CD14-positive monocyte (primary cell): ENCODE measurements at regions of chr1 and their contacts with region 1.

Region 1: GRCh38 chr1:3624200-3625136 is at the start of gene TPRG1L:
- DNase-seq: peak; percentile 96 to 97 (median 96)
- H3K4me3 ChIP-seq: peak within 1 kb of the TSS; percentile 67 to 99 (median 69)
- H3K4me3 Mint-ChIP-seq: peak within 1 kb of the TSS; percentile 92 to 94
- H3K27ac ChIP-seq: peak within 1 kb of the TSS in 1 of 2 donors; percentile 74
- H3K27ac Mint-ChIP-seq: peak within 1 kb of the TSS; percentile 31 to 90 (median 82)
- H3K4me1 ChIP-seq: peaks cover 27 to 35% of the 10 kb centered on the region in 2 donors
- H3K4me1 Mint-ChIP-seq: peaks cover 40% of the 10 kb centered on the region
- H3K27me3 ChIP-seq: no peaks in the 10 kb centered on the region
- H3K27me3 Mint-ChIP-seq: peaks cover 0 to 16% (median 1%) of the 10 kb centered on the region in 3 donors
- CTCF ChIP-seq: no peak
- polyA plus RNA-seq, gene TPRG1L: 16.1 to 19.7 (median 18.5) TPM

Region 2: GRCh38 chr1:3482590-3482899 is 141.9 kb before region 1 on chr1:
- intact Hi-C with region 1: no loop called
- DNase-seq: no peak
- H3K4me3 ChIP-seq: no peak overlapping the region
- H3K4me3 Mint-ChIP-seq: no peak overlapping the region
- H3K27ac ChIP-seq: no peak overlapping the region
- H3K27ac Mint-ChIP-seq: no peak overlapping the region
- H3K4me1 ChIP-seq: no peaks in the 10 kb centered on the region
- H3K4me1 Mint-ChIP-seq: no peaks in the 10 kb centered on the region
- H3K27me3 ChIP-seq: no peaks in the 10 kb centered on the region
- H3K27me3 Mint-ChIP-seq: peaks cover 2 to 7% (median 3%) of the 10 kb centered on the region in 3 donors
- CTCF ChIP-seq: no peak

Region 3: GRCh38 chr1:3649342-3650247 is 25.1 kb after region 1 on chr1 and contains the start of gene WRAP73:
- intact Hi-C with region 1: loop called in 1 of 2 experiments (anchors 1 kb)
- DNase-seq: peak; percentile 86 to 93 (median 87)
- H3K4me3 ChIP-seq: peak within 1 kb of the TSS; percentile 71 to 91 (median 75)
- H3K4me3 Mint-ChIP-seq: peak within 1 kb of the TSS; percentile 82 to 90
- H3K27ac ChIP-seq: peak within 1 kb of the TSS in 1 of 2 donors; percentile 66
- H3K27ac Mint-ChIP-seq: peak within 1 kb of the TSS in 2 of 7 donors; percentile 87 to 89
- H3K4me1 ChIP-seq: peaks cover 36 to 48% of the 10 kb centered on the region in 2 donors
- H3K4me1 Mint-ChIP-seq: peaks cover 26% of the 10 kb centered on the region
- H3K27me3 ChIP-seq: peaks cover 34 to 41% of the 10 kb centered on the region in 2 donors
- H3K27me3 Mint-ChIP-seq: peaks cover 35 to 44% (median 39%) of the 10 kb centered on the region in 3 donors
- CTCF ChIP-seq: peak; percentile 16
- polyA plus RNA-seq, gene WRAP73: 26.1 to 64.9 (median 33.2) TPM

Region 4: DNA sequence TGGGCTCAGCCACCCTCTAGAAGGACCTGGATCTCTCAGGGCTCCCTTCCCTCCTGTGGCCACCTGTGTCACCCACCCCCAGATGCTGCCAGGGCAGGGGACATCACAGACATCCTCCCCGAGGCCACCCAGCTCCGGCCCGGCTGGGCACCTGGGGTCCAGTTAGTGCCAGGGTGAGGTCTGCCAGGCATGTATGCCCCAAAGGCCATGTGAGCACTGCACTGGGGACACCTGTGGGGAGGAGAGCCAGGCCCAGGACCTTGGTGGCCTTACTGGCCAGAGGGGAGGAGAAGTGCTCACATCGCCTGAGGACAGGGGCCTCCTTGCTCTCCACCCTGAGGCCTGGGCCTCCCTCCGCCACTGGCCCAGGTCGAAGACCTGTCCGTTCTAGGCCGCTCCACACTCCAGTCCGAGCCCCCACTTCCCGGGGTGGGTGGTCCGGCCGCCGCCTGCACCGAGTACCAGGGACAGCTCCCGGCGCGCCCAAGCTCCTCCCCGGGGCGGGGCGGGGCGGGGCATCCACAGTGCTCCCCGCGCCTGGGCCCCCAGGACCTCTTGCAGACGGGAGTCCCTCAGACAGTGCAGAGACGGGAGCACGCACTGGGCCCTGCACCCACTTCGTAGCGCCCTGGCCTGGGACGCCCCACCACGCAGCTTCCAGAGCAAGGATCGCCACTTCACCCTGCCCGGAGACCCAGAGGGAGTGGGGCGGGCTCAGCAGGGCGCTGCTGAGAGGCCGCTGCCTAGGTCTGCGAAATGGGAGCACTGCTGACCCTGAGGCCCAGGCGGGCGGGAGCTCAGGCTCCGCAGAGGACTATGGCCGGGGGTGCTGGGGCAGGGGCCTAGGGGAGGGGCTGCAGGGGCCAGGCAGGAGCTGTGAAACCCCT is 93.5 kb after region 1 on chr1:
- intact Hi-C with region 1: no loop called
- DNase-seq: no peak
- H3K4me3 ChIP-seq: no peak overlapping the region
- H3K4me3 Mint-ChIP-seq: no peak overlapping the region
- H3K27ac ChIP-seq: no peak overlapping the region
- H3K27ac Mint-ChIP-seq: no peak overlapping the region
- H3K4me1 ChIP-seq: peaks cover 6 to 9% of the 10 kb centered on the region in 2 donors
- H3K4me1 Mint-ChIP-seq: peaks cover 2% of the 10 kb centered on the region
- H3K27me3 ChIP-seq: peaks cover 0 to 3% of the 10 kb centered on the region in 2 donors
- H3K27me3 Mint-ChIP-seq: peaks cover 4 to 15% (median 6%) of the 10 kb centered on the region in 3 donors
- CTCF ChIP-seq: no peak

Region 5: DNA sequence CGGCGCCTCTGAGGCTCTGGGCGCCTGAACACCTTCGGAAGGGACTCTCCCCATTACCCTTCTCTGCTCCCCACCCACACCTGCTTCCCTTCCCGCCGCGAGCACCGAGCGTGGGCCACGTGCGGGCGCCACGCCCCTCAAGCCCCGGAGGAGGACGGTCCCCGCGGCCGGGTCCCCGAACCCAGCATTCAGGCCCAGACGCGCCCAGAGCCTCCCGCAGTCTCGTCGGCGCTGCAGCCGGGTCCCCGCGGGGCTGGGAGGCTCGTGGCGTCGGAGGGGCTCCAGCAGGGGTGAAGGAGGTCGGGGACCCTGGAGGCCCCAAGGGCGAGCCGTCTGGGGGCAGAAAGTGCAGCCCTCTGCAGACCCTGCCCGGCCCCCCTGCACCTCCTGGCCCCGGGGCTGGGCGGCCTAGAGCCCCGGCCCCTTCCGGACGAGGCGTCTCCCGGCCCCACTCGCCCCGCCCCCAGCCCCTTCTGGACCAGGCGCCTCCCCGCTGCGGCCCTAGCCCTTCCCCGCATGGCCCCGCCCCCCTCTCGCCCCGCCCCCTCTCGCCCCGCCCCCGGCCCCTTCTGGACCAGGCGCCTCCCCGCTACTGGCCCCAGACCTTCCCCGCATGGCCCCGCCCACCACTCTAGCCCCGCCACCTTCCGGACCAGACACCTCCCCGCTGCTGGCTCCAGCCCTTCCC is 147.7 kb after region 1 on chr1:
- intact Hi-C with region 1: loop called in 1 of 2 experiments (anchors 10 kb)
- DNase-seq: peak; percentile 67 to 80 (median 74)
- H3K4me3 ChIP-seq: peak overlapping the region; percentile 29 to 78 (median 48)
- H3K4me3 Mint-ChIP-seq: peak overlapping the region; percentile 68 to 75
- H3K27ac ChIP-seq: no peak overlapping the region
- H3K27ac Mint-ChIP-seq: no peak overlapping the region
- H3K4me1 ChIP-seq: peaks cover 19 to 32% of the 10 kb centered on the region in 2 donors
- H3K4me1 Mint-ChIP-seq: peaks cover 20% of the 10 kb centered on the region
- H3K27me3 ChIP-seq: peaks cover 0 to 27% of the 10 kb centered on the region in 2 donors
- H3K27me3 Mint-ChIP-seq: peaks cover 17 to 40% (median 19%) of the 10 kb centered on the region in 3 donors
- CTCF ChIP-seq: no peak